Endothelial cell of umbilical vein (primary cell): ENCODE measurements at regions of chrX and their contacts with region 1.

Region 1: DNA sequence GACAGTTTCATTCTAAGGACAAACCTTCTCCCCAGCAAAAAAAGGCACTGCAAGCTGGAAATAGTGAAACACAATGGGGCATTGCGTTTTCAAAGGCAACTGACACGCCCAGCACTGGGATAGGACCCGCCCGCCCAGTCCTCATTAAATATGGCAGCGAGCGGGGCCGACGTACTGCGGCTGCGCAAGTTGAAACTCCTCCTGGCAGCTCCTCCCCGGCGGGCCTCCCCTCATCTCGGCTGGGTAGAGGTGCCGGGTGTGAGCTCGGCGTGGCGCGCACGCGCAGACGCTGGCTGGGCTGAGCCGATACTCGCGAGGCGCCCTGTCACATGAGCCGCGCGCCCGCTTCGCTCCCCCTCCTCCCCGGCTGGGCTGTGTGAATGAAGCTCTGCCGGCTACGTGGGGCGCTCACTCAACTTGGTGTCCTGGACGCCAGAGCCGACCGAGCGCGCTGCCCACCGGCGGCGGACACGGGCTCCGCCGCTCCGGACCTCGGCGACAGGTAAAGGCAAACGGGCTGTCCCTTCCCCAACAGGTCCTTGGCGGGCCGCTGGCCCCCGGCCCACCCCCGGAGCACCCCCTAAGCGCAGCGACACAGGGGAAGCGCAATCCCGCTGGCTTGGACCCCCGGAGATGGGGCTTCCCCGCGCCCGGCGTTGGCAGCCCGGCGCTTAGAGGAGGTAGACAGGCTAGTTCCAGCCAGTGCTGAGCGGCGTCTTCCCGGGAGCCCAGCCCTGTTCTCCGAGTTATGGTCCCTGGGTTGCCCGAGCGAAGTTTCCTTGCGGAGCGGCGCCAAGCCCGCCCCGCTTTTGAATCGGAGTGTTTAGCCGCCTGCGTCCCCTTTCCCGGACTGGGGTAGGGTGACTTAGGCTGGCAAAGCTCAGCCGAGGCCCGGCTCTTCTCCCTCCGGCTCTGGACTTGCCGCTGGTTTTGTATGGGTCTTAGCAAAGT is at the start of gene CLCN5:
- DNase-seq: peak; percentile 97
- H3K4me3 ChIP-seq: peak within 1 kb of the TSS; percentile 53 to 87 (median 79)
- H3K27ac ChIP-seq: peak within 1 kb of the TSS; percentile 45
- H3K4me1 ChIP-seq: peaks cover 3% of the 10 kb centered on the region
- H3K27me3 ChIP-seq: no peaks in the 10 kb centered on the region
- CTCF ChIP-seq: no peak
- POLR2A ChIP-seq: peak; percentile 43
- total RNA-seq, gene CLCN5: 12.9 TPM in 2 replicates

Region 2: DNA sequence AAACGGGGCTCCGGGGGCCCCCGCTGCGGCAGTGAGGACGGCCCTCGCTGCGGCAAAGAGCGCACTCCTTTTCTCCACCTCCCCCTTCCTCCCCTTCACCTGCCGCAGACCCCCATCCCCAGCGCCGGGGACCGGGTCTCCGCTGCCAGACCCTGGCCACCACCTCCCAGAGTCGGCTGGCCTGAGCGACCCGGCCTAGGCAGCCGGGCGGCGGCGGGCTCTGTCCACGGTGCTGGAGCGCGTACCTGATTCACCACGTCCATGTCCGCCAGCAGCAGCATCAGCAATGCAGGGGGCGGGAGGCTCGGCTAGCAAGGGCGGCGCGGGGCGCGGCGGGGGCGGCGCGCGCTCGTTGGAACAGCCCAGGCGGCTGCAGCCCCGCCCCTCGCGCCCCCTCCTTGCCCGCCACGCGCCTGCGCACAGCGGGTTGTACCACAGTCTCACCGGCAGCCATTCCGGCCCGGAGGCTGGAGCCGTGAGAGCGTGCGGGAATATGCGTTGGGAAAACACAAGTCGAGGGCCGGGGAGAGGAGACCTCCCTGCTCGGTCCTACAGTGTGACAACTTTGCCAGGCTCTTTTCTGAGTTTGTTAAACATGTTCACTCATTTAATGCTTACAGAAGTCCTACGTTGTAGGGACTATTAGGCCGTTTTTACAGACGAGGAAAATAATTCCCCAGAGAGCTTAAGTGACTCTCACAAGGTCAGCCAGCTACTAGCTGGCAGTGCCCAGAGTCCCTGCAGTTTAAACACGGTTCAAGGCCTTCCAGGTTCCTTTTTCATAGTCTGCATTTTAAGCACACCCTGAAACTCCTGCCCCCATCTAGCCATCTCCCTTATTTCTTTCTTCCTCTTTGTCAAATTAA is 722.4 kb before region 1 on chrX and contains the start of gene SYP:
- CTCF ChIA-PET with region 1: no interaction called
- POLR2A ChIA-PET with region 1: no interaction called
- dilution Hi-C with region 1: no loop called
- intact Hi-C with region 1: loop called (anchors 5 kb)
- DNase-seq: peak; percentile 84
- H3K4me3 ChIP-seq: peak within 1 kb of the TSS in 1 of 3 experiments; percentile 36
- H3K27ac ChIP-seq: no peak within 1 kb of the TSS
- H3K4me1 ChIP-seq: peaks cover 3% of the 10 kb centered on the region
- H3K27me3 ChIP-seq: peaks cover 0 to 2% of the 10 kb centered on the region in 2 experiments
- CTCF ChIP-seq: no peak
- POLR2A ChIP-seq: peak; percentile 85
- total RNA-seq, gene SYP: 0.46 and 0.77 TPM in 2 replicates

Region 3: GRCh38 chrX:49884290-49884862 is 38.2 kb before region 1 on chrX:
- CTCF ChIA-PET with region 1: interaction called, 27 read pairs
- POLR2A ChIA-PET with region 1: no interaction called
- dilution Hi-C with region 1: no loop called
- intact Hi-C with region 1: loop called (anchors 2 kb)
- DNase-seq: peak; percentile 47
- H3K4me3 ChIP-seq: no peak overlapping the region
- H3K27ac ChIP-seq: no peak overlapping the region
- H3K4me1 ChIP-seq: peaks cover 5% of the 10 kb centered on the region
- H3K27me3 ChIP-seq: no peaks in the 10 kb centered on the region
- CTCF ChIP-seq: peak; percentile 59 to 76
- POLR2A ChIP-seq: no peak

Region 4: DNA sequence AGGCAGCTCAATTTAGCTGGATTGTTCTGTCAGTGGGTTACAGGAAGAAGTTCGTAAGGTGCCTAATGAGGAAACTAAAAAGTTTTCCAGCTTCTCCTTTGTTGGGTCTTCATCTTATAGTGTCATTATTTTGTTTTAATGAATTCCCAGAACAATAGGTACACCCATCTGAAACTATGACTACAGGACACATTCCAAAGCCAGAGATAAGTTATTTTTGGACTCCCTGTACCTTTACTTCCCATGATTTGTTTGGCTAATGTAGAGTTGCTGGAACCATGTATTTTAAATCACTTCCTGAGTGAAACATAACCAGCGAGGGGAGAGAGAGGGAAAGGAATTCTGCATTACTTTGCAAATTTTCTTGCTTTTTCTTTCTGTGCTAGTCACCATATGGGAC is 113.9 kb after region 1 on chrX:
- CTCF ChIA-PET with region 1: no interaction called
- POLR2A ChIA-PET with region 1: no interaction called
- dilution Hi-C with region 1: no loop called
- intact Hi-C with region 1: loop called (anchors 2 kb)
- DNase-seq: peak; percentile 32
- H3K4me3 ChIP-seq: peak overlapping the region in 1 of 3 experiments; percentile 40
- H3K27ac ChIP-seq: peak overlapping the region; percentile 29
- H3K4me1 ChIP-seq: peaks cover 14% of the 10 kb centered on the region
- H3K27me3 ChIP-seq: no peaks in the 10 kb centered on the region
- CTCF ChIP-seq: no peak
- POLR2A ChIP-seq: no peak

Region 5: DNA sequence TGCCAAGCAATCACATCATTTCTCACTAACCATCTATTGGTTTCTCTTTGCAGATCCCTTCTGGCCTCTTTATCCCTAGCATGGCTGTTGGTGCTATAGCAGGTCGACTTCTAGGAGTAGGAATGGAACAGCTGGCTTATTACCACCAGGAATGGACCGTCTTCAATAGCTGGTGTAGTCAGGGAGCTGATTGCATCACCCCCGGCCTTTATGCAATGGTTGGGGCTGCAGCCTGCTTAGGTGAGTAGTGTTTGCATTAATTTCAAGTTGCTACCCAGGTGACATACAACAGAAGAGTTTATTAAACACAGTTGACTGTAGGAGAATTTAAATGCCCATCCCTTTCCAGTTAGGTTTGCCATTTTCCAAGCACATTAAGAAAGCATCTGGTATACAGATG is 166.1 kb after region 1 on chrX:
- CTCF ChIA-PET with region 1: no interaction called
- POLR2A ChIA-PET with region 1: no interaction called
- dilution Hi-C with region 1: no loop called
- intact Hi-C with region 1: no loop called
- DNase-seq: no peak
- H3K4me3 ChIP-seq: no peak overlapping the region
- H3K27ac ChIP-seq: no peak overlapping the region
- H3K4me1 ChIP-seq: no peaks in the 10 kb centered on the region
- H3K27me3 ChIP-seq: no peaks in the 10 kb centered on the region
- CTCF ChIP-seq: no peak
- POLR2A ChIP-seq: no peak

Region 6: DNA sequence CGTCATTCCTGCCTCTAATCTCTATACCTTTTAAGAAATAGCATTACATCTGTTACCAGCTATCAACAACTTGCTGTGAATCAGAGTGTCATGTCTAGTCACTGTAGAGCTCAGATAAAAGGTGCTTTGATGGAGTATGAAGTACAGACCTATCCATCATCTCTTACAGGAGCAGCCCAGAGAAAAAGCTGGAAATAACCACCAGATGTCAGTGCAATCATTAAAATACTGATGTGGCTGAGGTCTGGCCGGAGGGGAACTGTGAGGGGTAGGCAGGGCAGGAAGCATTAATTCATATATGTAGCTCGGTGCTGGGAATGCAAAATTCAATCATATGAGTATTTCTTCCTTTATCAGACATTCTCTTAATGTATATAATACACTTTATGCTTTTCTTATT is 177.6 kb after region 1 on chrX:
- CTCF ChIA-PET with region 1: interaction called, 5 read pairs
- POLR2A ChIA-PET with region 1: no interaction called
- dilution Hi-C with region 1: no loop called
- intact Hi-C with region 1: loop called (anchors 1 kb)
- DNase-seq: peak; percentile 45
- H3K4me3 ChIP-seq: no peak overlapping the region
- H3K27ac ChIP-seq: no peak overlapping the region
- H3K4me1 ChIP-seq: peaks cover 6% of the 10 kb centered on the region
- H3K27me3 ChIP-seq: no peaks in the 10 kb centered on the region
- CTCF ChIP-seq: peak; percentile 12 to 20
- POLR2A ChIP-seq: no peak